Activated CD8-positive, alpha-beta memory T cell treated with anti-CD3 and anti-CD28 coated beads, Interleukin-2, amount 10 ng/mL, durations not matched to agents 7 days and 5 days (primary cell): ENCODE measurements at regions of chr5 and their contacts with region 1.

Region 1: DNA sequence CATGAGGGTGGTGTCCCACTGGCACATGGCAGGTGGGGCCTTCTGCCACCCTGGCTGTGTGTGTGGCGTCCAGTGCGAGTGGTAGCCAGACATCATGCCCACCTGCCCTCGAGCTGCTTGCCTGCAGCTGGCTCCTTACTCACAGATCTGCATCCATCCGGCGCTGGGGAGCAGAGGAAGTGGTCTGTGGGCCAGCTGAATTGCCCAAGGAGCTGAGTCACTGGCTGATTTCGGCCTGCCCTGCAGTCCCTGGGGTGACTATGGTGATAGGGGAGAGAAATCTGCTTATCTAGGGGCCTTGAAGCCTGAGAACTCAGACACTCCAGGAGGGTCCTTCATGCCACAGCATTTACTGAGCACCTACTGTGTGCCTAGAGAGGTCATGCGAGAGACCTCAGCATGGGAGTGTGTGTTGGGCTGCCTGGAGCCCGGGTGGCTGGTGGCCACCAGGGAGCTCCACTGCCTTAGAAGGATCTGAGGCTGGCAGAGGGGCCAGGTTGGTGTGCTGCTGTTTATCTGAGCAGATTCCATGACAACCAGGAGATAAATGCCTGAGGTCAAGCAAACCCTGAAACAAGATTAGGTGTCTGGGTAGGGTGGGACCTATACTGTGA is 57.1 kb downstream of the SLC22A5 start:
- DNase-seq: peak; percentile 94
- ATAC-seq: peak; percentile 65
- H3K4me3 Mint-ChIP-seq: peak overlapping the region; percentile 81
- H3K27ac Mint-ChIP-seq: peak overlapping the region; percentile 98
- H3K4me1 Mint-ChIP-seq: peaks cover 99% of the 10 kb centered on the region
- H3K27me3 Mint-ChIP-seq: no peaks in the 10 kb centered on the region

Region 2: GRCh38 chr5:132386644-132387286 is 39.9 kb before region 1 on chr5:
- CTCF ChIA-PET with region 1: interaction called, 10 read pairs
- DNase-seq: peak; percentile 88
- ATAC-seq: peak; percentile 96
- H3K4me3 Mint-ChIP-seq: no peak overlapping the region
- H3K27ac Mint-ChIP-seq: peak overlapping the region; percentile 69
- H3K4me1 Mint-ChIP-seq: peaks cover 50% of the 10 kb centered on the region
- H3K27me3 Mint-ChIP-seq: no peaks in the 10 kb centered on the region

Region 3: DNA sequence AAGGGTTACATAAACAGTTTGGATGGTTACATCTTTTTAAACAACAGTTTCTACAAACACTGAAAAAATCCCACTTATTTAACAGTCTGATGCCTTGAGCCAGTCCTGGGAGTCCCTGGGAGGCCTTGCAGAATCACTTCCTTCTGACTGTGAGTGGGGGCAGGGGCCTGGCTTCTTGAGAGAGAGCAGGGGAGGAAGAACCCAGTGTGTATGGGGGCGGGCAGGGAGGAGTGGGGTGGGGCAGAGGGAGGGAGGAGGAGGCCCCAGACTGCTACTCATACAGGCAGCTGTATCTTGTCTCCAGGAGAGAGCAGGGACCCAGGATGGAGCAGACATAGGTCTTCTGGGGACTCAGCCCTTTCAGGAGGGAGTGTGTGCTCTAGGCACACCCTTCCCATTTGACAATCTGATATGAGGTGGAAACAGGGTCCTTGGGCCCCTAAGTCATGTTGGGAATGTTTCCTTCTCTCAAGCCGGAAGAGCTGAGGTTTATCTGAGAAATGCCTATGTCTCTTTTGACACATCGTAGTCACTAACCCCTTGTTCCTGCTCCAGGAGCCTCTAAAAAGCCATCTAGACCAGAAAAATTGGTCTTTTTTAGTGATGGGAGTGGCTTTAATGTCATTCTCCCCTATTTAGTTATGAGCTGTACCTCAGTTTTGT is 11.1 kb after region 1 on chr5:
- CTCF ChIA-PET with region 1: interaction called, 63 read pairs
- DNase-seq: peak; percentile 86
- ATAC-seq: peak; percentile 96
- H3K4me3 Mint-ChIP-seq: peak overlapping the region; percentile 43
- H3K27ac Mint-ChIP-seq: peak overlapping the region; percentile 86
- H3K4me1 Mint-ChIP-seq: peaks cover 81% of the 10 kb centered on the region
- H3K27me3 Mint-ChIP-seq: no peaks in the 10 kb centered on the region

Region 4: DNA sequence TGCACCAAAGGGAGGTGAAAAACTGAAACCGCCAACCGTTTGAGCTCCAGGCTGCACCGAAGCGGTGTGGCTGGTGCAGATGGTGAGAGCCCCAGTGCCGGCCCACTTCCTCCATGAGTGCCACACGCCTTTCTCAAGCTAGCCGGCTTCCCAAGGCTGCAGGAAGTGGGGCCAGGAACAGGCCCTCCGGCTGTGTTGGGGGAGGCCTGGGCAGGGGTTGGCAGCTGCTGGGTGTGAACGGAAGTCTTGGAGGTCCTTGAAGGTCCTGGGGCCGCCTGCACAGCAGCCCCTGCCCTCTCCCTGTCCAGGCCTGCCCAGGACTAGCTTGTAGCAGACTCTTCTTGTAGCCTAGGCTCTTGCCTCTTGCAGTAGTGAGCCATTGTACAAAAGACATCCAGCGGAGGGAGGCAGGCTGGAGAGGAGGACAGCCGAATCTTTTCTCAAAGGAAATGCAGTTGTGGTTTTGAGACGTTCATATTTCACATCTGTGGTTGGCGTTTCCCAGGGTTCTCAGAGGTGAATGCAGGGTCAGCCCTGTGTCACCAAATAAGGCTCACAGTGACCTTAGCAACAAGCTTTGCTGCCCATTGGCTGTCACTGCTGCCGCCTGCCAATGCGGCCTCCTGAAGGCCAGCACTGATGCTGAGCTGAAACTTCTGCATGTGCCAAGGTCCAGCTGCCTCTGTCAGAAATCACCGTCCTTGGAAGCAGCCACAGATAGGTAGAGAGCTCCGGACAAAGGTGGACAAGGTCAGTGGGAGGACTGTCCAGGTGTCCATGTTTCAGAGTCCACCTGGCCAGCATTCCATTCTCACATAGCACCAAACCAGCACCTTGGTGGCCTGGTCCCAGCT is 40.0 kb after region 1 on chr5:
- CTCF ChIA-PET with region 1: interaction called, 103 read pairs
- DNase-seq: peak; percentile 93
- ATAC-seq: peak; percentile 77
- H3K4me3 Mint-ChIP-seq: peak overlapping the region; percentile 59
- H3K27ac Mint-ChIP-seq: peak overlapping the region; percentile 86
- H3K4me1 Mint-ChIP-seq: peaks cover 98% of the 10 kb centered on the region
- H3K27me3 Mint-ChIP-seq: no peaks in the 10 kb centered on the region

Region 5: GRCh38 chr5:132479111-132479951 is 52.7 kb after region 1 on chr5:
- CTCF ChIA-PET with region 1: interaction called, 68 read pairs
- DNase-seq: no peak
- ATAC-seq: no peak
- H3K4me3 Mint-ChIP-seq: no peak overlapping the region
- H3K27ac Mint-ChIP-seq: peak overlapping the region; percentile 72
- H3K4me1 Mint-ChIP-seq: peaks cover 80% of the 10 kb centered on the region
- H3K27me3 Mint-ChIP-seq: no peaks in the 10 kb centered on the region

Region 6: DNA sequence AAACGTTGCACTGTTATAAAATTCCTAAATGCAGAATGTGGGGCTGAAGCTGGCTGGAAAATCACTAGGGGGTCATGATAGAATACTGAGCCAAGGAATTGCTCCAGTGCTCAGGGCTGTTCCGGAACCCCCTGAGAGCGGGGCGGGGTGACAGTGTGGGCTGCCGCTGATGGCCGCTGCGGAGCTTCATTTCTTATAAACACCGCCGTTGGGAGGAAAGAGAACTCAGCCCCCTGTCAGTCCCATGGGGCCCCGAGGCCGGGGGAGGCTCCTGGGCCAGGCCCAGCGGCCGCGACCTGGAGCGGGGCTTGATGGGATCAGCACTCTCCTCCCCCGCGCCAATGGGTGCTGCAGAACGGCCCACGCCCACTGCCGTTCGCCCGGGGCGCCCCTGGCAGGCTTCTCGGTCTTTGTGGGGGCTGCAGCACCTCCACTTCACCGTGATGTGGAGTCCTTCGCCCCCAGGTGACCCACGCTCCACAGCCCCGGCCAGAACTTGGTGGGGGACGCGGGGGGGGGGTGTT is 69.1 kb after region 1 on chr5:
- CTCF ChIA-PET with region 1: interaction called, 85 read pairs
- DNase-seq: peak; percentile 91
- ATAC-seq: peak; percentile 55
- H3K4me3 Mint-ChIP-seq: peak overlapping the region; percentile 87
- H3K27ac Mint-ChIP-seq: peak overlapping the region; percentile 92
- H3K4me1 Mint-ChIP-seq: peaks cover 74% of the 10 kb centered on the region
- H3K27me3 Mint-ChIP-seq: no peaks in the 10 kb centered on the region